ENCODE measurements at regions of chr10 and their contacts with region 1.

Region 1: DNA sequence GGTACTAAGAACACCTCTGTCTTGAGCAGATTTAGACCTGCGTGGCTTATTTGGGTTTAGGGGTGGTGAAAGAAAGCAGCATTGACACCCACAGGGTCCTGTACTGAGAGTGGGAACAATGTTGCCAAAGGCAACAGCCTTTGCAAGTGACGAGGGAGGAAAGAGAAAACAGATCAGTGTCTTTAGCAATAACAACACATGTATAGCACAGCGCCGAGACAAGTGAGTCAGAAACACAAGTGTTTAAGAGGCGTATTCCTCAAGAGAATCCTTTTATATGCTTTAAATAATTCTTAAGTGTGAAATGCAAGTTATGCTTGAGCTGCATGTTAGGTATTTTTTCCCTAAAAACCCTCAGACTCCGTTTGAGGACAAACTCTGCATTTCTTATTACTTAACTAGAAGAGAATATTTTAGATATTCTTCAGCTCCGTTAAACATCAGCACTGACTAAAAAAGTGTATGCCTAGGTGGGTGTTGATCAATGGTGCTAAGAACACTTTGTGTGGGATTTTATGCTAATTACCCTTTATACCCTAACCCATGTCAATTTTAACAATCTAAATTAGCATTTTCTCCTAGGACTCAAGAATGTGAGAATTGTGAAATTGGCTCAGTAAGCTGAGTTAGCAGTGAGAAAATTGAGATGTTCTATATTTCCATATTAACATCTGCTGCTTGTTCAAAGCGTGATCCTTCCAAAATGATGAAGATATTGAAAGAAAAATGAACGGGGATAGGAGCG is 1095.4 kb upstream of the CELF2 start:
- DNase-seq: peak in 3 of 10 donors; percentile 12 to 53 (median 42)
- H3K4me3 ChIP-seq: no peak overlapping the region
- H3K27ac ChIP-seq: peak overlapping the region in 46 of 59 donors; percentile 10 to 87 (median 64)
- H3K27me3 ChIP-seq: no peaks in the 10 kb centered on the region
- CTCF ChIP-seq: no peak

Region 2: GRCh38 chr10:10330418-10330817 is 408.1 kb after region 1 on chr10:
- intact Hi-C with region 1: no loop called
- DNase-seq: no peak
- H3K4me3 ChIP-seq: no peak overlapping the region
- H3K27ac ChIP-seq: peak overlapping the region in 6 of 59 donors; percentile 6 to 41 (median 18)
- H3K27me3 ChIP-seq: no peaks in the 10 kb centered on the region
- CTCF ChIP-seq: no peak

Region 3: DNA sequence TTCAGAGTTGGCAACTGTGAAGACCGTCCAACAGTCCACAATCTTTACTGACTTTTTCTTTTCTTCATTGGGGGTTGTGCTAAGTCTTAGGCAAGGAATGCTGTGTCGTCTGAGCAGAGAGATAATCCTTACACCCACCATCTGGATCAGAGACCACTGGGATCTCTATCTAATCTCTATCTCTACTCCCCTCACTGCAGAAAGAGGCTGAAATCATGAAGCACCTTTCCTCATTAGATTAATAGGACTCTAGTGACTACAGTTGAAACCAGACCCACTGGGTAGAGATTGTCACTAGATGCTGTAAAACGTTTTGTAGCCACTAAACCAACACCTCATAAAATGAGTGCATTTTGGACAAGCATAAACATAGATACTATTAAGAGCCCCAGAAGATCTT is 708.0 kb after region 1 on chr10:
- intact Hi-C with region 1: loop called in 1 of 2 experiments (anchors 5 kb)
- DNase-seq: no peak
- H3K4me3 ChIP-seq: no peak overlapping the region
- H3K27ac ChIP-seq: no peak overlapping the region
- H3K27me3 ChIP-seq: no peaks in the 10 kb centered on the region
- CTCF ChIP-seq: no peak

Measured in dorsolateral prefrontal cortex (tissue), 120 donors.